Psoas muscle (tissue), 8 donors: ENCODE measurements at regions of chr2 and their contacts with region 1.

Region 1: DNA sequence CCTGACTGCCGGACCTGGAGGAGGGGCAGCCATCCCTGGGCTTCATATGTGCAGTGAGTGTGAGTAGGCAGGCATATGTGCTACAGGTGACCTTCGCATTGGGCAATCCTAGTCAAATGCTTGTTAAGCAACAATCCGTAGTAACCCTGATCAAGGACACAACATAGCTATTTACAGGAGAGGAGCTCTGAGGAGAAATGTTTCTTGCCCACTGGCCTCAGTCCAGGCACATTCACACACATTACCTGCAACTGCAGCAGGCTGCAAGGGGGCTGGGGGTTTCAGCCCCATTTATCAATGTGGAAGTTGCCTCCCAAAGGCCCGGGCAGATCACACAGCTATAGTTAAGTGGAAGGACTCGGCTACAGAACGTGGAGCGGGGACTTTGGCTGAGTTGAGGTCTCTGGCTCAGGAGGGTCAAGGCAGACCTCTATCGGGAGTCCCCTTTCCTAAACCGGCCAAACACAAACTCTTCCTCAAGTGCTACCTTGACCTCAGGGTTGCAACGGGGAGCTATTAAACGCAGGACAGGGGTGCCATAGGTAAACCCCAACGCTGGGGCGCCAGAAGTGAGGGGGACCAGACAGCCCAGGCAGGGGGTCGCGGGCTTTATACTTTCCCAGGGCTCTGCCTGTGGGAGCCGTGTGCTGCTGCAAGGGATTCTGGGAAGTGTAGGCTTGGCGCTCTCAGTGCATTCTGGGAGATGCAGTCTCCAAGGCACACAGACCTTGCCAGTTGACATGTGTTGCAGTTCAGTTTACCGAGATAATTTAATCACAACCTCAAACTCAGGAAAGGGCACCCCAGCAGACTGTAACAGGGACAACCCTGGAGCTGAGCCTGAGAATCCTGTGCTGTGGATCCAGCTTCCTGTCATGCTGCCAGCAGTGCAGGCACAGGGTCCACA is 9.4 kb downstream of the KHK start:
- DNase-seq: peak; percentile 61 to 83
- ATAC-seq: peak; percentile 84 to 91 (median 87)
- H3K4me3 ChIP-seq: peak overlapping the region; percentile 66
- H3K27ac ChIP-seq: peak overlapping the region; percentile 65
- H3K4me1 ChIP-seq: peaks cover 14% of the 10 kb centered on the region
- H3K27me3 ChIP-seq: no peaks in the 10 kb centered on the region
- CTCF ChIP-seq: no peak

Region 2: GRCh38 chr2:27191053-27191829 is 95.2 kb after region 1 on chr2:
- intact Hi-C with region 1: loop called (anchors 1 to 5 kb)
- DNase-seq: no peak
- ATAC-seq: peak; percentile 70 to 83 (median 74)
- H3K4me3 ChIP-seq: no peak overlapping the region
- H3K27ac ChIP-seq: no peak overlapping the region
- H3K4me1 ChIP-seq: peaks cover 11% of the 10 kb centered on the region
- H3K27me3 ChIP-seq: no peaks in the 10 kb centered on the region
- CTCF ChIP-seq: peak; percentile 64

Region 3: DNA sequence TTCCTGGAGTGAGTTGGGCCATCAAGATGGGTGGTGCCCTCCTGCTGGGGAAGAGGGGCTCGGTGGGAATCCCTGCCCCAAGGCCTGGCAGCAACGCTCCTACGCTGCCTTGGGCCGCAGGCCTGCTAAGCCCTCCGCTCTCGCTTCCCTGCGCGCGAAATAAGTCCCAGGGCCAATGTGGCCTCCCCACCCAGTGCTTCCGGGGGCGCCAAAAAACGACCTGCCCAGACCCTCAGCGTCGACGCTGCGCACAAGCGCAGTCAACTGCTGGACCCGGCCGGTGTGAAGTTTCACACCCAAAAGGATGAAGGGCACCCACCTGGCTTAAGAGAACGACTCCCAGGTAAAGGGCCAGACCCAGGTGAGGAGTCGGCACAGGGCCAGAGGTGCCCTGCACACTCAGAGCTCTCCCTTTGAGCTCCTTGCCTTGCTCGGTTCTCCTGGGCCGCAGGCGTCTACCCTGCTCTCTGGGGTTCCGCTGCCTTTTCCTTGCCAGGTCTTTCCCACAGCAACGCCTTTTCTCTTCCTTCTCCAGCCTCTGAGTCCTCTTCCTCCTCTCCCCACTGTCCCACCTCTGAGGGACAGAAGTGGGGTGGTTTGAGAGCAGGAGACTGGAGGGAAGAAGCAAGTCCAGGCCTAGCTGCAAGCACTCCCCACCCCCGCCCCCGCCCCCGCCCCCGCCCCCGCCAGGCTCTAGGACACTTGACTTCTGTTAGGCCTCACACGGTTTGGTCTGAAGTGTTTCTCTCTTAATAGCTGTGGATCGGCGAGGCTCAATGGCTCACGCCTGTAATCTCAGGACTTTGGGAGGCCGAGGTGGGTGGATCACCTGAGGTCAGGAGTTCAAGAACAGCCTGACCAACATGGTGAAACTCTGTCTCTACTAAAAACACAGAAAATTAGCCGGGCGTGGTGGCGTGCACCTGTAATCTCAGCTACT is 179.5 kb after region 1 on chr2 and contains the start of gene DNAJC5G:
- intact Hi-C with region 1: loop called (anchors 5 to 10 kb)
- DNase-seq: no peak
- ATAC-seq: no peak
- H3K4me3 ChIP-seq: no peak within 1 kb of the TSS
- H3K27ac ChIP-seq: no peak within 1 kb of the TSS
- H3K4me1 ChIP-seq: peaks cover 5% of the 10 kb centered on the region
- H3K27me3 ChIP-seq: peaks cover 0 to 2% (median 0%) of the 10 kb centered on the region in 3 donors
- CTCF ChIP-seq: no peak
- total RNA-seq, gene DNAJC5G: not detected

Region 4: GRCh38 chr2:27281855-27282559 is 186.0 kb after region 1 on chr2 and contains the start of gene TRIM54:
- intact Hi-C with region 1: loop called (anchors 5 to 10 kb)
- DNase-seq: peak; percentile 64 to 88
- ATAC-seq: peak; percentile 83 to 91 (median 87)
- H3K4me3 ChIP-seq: peak within 1 kb of the TSS; percentile 71
- H3K27ac ChIP-seq: peak within 1 kb of the TSS; percentile 93
- H3K4me1 ChIP-seq: peaks cover 24% of the 10 kb centered on the region
- H3K27me3 ChIP-seq: no peaks in the 10 kb centered on the region
- CTCF ChIP-seq: no peak
- total RNA-seq, gene TRIM54: 387 to 784 (median 462) TPM